ENCODE measurements at regions of chr12 and their contacts with region 1.

Region 1: DNA sequence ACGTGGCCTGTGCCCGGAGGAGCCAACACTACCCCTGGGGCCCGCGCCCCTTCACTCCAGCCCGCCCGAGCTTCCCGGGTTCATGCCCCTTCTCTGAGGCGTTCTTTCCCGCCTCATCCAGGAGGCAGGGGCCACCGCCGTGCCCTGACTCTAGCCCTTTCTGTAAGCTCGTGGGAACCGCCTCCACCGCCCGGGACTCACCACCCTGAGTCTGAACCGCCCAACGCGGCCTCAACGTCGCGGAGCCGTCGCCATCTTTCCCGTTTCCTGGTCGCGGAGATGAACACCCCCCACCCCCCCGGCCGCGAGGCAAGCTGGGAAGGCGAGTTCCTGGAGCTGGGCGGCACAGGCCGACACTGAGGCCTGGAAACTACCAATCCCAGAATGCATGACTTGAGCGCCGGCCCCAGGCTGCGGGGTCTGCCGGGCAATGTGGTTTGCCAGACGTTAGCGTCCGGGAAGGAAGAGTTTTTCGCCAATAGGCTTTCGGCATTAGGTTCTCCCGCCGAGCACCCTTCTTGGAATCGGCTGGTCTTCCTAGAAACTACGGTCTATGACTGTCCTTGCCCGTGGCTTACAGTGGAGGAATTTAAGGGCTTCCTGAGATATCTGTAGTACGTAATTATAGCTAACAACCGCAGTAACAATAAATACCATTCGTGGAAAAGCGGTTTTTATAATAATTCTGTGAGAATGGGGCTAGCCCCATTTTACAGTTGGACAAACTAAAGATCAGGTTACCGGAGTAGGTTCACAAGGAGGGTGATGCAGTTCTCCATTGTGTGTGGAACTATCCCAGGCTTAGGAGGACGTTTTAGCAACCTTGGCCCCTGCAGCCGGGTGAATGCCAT is at the start of gene DDX23:
- DNase-seq: peak; percentile 99
- H3K4me3 ChIP-seq: peak within 1 kb of the TSS; percentile 79
- H3K27ac ChIP-seq: peak within 1 kb of the TSS; percentile 84
- H3K4me1 ChIP-seq: peaks cover 19% of the 10 kb centered on the region
- H3K27me3 ChIP-seq: no peaks in the 10 kb centered on the region
- CTCF ChIP-seq: no peak
- total RNA-seq, gene DDX23: 111 and 135 TPM in 2 replicates

Region 2: DNA sequence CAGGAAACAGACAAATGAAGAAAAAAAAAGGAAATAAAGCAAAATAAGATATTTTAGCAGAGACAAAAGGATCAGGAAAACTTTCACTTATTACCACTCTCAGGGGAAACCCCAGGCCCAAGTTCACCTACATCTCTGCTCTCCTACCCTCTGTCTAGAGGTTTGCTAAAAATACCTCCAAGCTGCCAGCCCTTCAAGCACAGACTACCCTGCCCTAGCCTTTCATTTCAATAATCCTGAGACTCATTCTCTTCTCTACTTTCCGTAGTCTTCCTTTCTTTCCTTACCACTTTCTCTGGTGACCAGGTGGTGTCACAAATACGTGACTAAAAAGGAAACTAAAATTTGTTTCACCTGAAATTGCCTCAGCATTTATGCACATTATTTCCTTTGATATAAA is 1180.0 kb before region 1 on chr12:
- CTCF ChIA-PET with region 1: interaction called, 16 read pairs
- POLR2A ChIA-PET with region 1: no interaction called
- intact Hi-C with region 1: no loop called
- DNase-seq: no peak
- H3K4me3 ChIP-seq: no peak overlapping the region
- H3K27ac ChIP-seq: no peak overlapping the region
- H3K4me1 ChIP-seq: peaks cover 7% of the 10 kb centered on the region
- H3K27me3 ChIP-seq: no peaks in the 10 kb centered on the region
- CTCF ChIP-seq: no peak

Region 3: GRCh38 chr12:48838048-48838447 is 14.1 kb before region 1 on chr12:
- CTCF ChIA-PET with region 1: no interaction called
- POLR2A ChIA-PET with region 1: no interaction called
- intact Hi-C with region 1: no loop called
- DNase-seq: no peak
- H3K4me3 ChIP-seq: no peak overlapping the region
- H3K27ac ChIP-seq: no peak overlapping the region
- H3K4me1 ChIP-seq: no peaks in the 10 kb centered on the region
- H3K27me3 ChIP-seq: no peaks in the 10 kb centered on the region
- CTCF ChIP-seq: no peak

Region 4: DNA sequence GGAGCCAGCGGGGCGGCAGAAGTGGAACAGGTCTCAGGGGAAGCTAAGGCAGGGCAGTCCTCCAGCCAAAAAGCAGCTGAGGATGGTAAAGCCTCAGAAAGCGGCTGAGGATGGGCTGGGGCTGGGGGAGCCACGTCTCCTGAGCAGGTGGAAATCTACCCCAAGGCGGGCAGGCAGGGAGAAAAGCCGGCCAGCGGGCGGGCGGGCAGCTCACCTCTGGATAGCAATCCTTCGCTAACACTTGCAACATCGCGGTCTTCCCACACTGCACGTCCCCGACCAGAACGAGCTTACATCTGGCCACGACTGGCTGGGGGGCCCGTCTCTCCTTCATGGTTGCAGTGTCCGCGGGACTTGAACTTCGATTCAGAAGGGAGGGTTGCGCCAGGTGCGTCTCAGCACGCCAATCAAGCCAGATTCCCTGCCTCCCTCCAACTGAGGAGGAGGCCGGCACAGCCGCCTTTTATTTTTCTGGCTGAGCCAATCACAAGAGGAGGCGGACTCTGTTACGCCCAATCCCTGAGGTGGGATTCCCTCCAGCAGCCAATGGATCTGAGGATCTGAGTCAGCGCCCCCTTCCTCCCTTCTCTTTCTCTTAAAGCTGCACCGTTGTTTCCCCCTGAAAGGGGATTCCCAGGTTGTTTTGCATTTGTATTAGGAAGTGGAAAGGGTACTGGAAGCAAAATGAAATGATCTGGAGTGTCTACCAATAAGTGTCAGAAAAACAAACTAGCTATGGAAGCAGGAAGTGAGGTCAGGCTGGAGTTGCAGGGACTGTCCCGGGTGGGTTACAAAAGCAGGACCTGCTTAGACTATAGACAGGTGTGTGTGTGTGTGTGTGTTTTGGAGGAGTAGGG is 13.6 kb after region 1 on chr12 and contains the start of gene RND1:
- CTCF ChIA-PET with region 1: interaction called, 12 read pairs
- POLR2A ChIA-PET with region 1: interaction called, 7 read pairs
- intact Hi-C with region 1: no loop called
- DNase-seq: peak; percentile 94
- H3K4me3 ChIP-seq: peak within 1 kb of the TSS; percentile 55
- H3K27ac ChIP-seq: no peak within 1 kb of the TSS
- H3K4me1 ChIP-seq: peaks cover 5% of the 10 kb centered on the region
- H3K27me3 ChIP-seq: peaks cover 24% of the 10 kb centered on the region
- CTCF ChIP-seq: no peak
- total RNA-seq, gene RND1: 2.0 and 2.7 TPM in 2 replicates

Region 5: DNA sequence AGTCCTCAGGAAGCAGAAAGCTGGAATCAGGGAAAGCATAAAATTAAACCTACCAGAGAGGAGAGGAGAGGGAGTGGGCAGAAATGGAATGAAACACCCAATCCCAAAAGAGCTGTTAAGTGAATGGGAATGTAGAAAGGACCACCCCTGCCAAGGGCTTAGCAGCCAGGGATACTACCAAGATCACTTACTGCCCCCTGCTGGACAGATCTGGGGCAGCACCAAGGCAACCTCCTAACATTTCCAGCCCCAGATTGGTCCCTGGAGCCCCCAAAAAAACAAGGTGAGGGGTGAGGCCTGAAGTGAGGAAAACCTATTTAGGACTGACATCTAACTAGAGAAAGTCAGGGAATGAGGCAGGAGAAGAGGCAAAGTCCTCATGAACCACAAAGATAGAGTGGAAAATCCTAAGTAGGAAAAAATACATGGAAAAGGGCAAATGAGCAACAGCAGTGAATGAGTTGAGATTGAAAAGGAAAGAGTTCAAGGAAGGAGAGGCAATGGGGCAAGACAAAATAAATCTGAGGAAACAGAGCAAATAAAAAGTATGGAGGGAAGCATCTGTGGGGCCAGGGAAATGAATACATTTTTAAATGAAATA is 84.4 kb after region 1 on chr12:
- CTCF ChIA-PET with region 1: interaction called, 9 read pairs
- POLR2A ChIA-PET with region 1: no interaction called
- intact Hi-C with region 1: loop called (anchors 2 kb)
- DNase-seq: peak; percentile 78
- H3K4me3 ChIP-seq: no peak overlapping the region
- H3K27ac ChIP-seq: no peak overlapping the region
- H3K4me1 ChIP-seq: no peaks in the 10 kb centered on the region
- H3K27me3 ChIP-seq: no peaks in the 10 kb centered on the region
- CTCF ChIP-seq: peak; percentile 96

Region 6: GRCh38 chr12:48988030-48988649 is 136.0 kb after region 1 on chr12:
- CTCF ChIA-PET with region 1: interaction called, 10 read pairs
- POLR2A ChIA-PET with region 1: no interaction called
- intact Hi-C with region 1: no loop called
- DNase-seq: peak; percentile 60
- H3K4me3 ChIP-seq: no peak overlapping the region
- H3K27ac ChIP-seq: no peak overlapping the region
- H3K4me1 ChIP-seq: peaks cover 17% of the 10 kb centered on the region
- H3K27me3 ChIP-seq: peaks cover 19% of the 10 kb centered on the region
- CTCF ChIP-seq: peak; percentile 97

Region 7: DNA sequence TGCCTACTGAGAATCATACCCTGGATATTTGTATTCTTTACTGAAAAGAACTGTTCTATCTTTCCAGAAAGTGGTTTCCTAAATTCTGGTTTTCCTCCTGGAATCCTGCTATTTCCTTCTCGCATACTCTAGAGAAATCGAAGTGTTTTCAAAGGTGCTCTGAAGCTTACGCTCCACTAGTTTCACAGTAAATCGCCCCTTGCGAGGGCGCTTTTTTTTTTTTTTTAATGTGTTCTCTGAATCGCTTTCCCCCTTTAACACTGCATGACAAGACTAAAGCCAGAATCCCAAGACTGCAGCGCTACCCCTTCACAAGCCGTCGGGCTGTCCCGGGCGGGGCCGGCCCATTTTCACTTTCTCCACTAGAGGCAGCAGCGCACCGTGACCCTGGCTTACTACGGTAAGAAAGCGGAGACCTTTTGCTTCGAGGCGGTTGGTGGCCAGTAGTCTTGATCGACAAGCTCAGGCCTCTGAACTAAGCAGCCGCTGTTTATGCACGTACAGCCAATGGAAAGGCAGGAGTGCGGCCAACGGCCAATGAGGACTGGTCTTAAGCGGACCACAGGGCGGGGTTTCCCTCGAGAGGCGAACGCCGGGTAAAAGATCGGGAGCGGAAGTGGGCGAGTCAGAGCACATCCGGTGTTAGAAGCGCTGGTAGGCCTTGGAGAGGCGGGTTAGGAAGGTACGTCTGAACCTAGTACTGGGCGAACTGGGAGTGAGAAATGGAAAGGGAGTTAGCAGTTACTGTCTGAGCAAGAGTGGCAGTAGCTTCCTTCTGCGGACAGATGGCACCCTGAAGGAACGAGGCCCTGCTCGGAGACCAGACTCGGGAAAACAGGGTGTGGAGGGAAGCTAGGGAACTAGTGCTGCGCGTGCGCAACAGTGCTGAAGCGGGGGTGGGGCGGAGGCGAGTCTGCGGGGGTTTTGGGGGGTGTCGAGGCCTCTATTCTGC is 889.1 kb after region 1 on chr12 and contains the start of gene TMBIM6:
- CTCF ChIA-PET with region 1: interaction called, 10 read pairs
- POLR2A ChIA-PET with region 1: no interaction called
- intact Hi-C with region 1: no loop called
- DNase-seq: peak; percentile 100
- H3K4me3 ChIP-seq: peak within 1 kb of the TSS; percentile 91
- H3K27ac ChIP-seq: peak within 1 kb of the TSS; percentile 95
- H3K4me1 ChIP-seq: peaks cover 14% of the 10 kb centered on the region
- H3K27me3 ChIP-seq: no peaks in the 10 kb centered on the region
- CTCF ChIP-seq: peak; percentile 98
- total RNA-seq, gene TMBIM6: 425 and 454 TPM in 2 replicates

Measured in A673 (cell line).